Transverse colon (tissue), 4 donors: ENCODE measurements at regions of chr21 and their contacts with region 1.

Region 1: DNA sequence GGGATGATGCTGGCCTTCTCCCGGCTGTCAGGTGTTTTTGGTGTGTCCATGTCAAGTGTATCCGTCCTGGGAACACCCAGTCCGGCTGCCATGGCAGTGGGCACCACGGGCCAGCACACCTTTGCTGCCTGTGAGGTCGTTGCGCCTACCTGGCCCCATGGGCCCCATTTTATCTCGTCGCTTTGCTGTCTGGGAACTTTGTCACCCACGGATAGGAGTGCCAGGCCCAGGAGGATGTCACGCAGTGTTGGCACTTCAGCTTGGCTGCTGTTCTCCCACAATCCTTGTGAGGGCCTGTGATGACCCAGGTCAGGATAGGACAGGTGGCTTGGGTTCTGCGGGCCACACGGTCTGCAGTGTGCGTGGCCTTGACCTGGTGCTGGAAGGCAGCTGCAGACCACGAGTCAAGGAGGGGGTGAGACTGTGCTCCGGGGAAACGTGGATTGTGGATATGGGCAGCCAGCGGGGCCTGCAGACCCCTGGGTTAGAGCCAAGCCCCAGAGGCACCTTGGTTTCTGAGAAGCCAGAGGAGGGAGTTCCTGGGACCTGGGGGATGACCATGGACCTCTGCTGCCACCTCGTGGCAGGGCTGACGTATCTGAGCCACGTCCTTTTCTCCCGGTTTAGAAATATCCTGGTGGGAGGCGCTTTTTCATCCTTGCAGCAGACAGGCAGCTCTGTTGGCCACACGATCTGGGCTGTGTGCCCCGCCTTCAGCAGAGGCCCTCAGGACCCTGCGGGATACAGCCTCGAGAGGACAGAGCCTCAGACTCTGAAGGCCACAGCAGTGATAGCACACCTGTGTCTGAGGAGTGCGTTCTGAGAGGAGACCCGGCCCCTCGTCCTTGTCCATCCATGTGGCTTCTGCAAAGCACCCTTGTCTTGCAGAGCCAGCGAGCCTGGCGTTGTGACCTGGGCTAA is 161.1 kb upstream of the COL6A1 start:
- DNase-seq: peak; percentile 77
- H3K4me3 ChIP-seq: no peak overlapping the region
- H3K27ac ChIP-seq: no peak overlapping the region
- H3K4me1 ChIP-seq: peaks cover 0 to 4% (median 0%) of the 10 kb centered on the region in 4 donors
- H3K27me3 ChIP-seq: no peaks in the 10 kb centered on the region
- CTCF ChIP-seq: peak; percentile 83 to 90 (median 83)
- EP300 ChIP-seq: no peak
- POLR2A ChIP-seq: no peak

Region 2: DNA sequence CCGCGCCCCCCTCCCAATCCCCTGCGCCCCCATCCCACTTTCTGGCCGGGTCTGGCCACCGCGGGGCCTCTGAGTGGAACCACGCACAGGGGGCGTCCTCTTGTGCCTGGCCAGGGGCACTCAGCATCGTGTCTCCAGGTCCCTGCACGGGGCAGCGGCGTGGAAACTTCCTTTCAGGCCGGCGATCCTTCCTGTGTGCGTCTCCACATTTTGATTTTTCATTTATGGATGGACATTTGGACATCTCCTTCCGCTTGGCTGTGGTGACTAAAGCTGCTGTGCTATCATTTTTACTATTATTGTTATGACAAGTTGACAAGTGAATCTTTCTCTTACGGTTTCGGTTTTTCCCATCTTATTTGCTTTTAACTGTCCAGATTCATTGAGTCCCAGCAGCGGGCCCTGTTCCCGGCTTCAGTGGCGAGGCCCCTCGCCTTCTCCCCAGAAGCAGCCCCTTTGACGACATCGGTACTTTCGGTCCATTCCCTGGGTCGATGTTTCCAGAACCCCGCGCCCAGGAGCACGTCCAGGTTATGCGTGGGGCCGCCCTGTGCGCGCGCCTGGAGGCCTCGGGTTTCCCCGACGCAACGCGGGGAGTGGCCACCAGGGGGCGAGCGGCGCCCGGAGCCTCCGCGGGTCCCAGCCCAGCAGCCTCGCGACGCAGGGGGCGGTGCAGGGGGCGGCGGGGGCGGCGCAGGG is 265.8 kb before region 1 on chr21:
- in situ Hi-C with region 1: loop called in 2 of 4 experiments (anchors 25 kb)
- intact Hi-C with region 1: loop called (anchors 10 kb)
- DNase-seq: peak; percentile 88
- H3K4me3 ChIP-seq: peak overlapping the region; percentile 16 to 78 (median 47)
- H3K27ac ChIP-seq: peak overlapping the region; percentile 71 to 79 (median 76)
- H3K4me1 ChIP-seq: peaks cover 0 to 18% (median 11%) of the 10 kb centered on the region in 4 donors
- H3K27me3 ChIP-seq: no peaks in the 10 kb centered on the region
- CTCF ChIP-seq: peak; percentile 76 to 89 (median 85)
- EP300 ChIP-seq: no peak
- POLR2A ChIP-seq: no peak

Region 3: GRCh38 chr21:45560106-45561021 is 260.1 kb before region 1 on chr21:
- in situ Hi-C with region 1: loop called in 3 of 4 experiments (anchors 10 to 25 kb)
- intact Hi-C with region 1: loop called (anchors 10 kb)
- DNase-seq: no peak
- H3K4me3 ChIP-seq: no peak overlapping the region
- H3K27ac ChIP-seq: no peak overlapping the region
- H3K4me1 ChIP-seq: peaks cover 0 to 6% (median 6%) of the 10 kb centered on the region in 4 donors
- H3K27me3 ChIP-seq: peaks cover 15% of the 10 kb centered on the region
- CTCF ChIP-seq: no peak
- EP300 ChIP-seq: no peak
- POLR2A ChIP-seq: no peak

Region 4: DNA sequence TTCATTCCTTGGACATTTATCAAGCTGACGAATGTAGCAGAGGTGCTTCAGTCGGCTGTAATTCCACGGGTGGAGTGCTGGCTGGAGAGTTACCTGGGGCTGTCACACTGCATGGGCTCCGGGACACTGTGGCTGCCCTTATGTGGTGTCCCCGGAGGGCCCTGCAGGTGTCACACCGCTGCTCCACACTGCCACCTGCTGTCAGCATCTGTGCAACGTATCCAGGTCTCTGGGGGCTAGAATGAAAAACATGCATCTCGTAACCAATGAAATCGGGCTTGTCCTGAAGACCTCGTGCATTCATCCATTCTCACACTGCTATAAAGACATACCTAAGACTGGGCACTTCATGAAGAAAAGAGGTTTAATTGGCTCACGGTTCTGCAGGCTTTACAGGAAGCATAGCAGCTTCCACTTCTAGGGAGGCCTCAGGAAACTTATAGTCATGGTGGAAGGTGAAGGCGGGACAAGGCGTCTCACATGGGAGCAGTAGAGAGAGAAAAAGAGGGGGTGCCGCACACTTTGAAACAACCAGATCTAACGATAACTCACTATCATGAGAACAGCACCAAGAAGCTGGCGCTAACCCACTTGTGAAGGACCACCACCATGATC is 223.6 kb before region 1 on chr21:
- in situ Hi-C with region 1: no loop called
- intact Hi-C with region 1: loop called (anchors 10 kb)
- DNase-seq: peak; percentile 82
- H3K4me3 ChIP-seq: no peak overlapping the region
- H3K27ac ChIP-seq: no peak overlapping the region
- H3K4me1 ChIP-seq: peaks cover 0 to 5% (median 2%) of the 10 kb centered on the region in 4 donors
- H3K27me3 ChIP-seq: no peaks in the 10 kb centered on the region
- CTCF ChIP-seq: peak; percentile 84 to 91 (median 86)
- EP300 ChIP-seq: no peak
- POLR2A ChIP-seq: no peak